ENCODE measurements at regions of chr7 and their contacts with region 1.

Region 1: GRCh38 chr7:81707966-81708365 is 61.9 kb downstream of the HGF start:
- DNase-seq: no peak
- ATAC-seq: no peak
- H3K4me3 ChIP-seq: no peak overlapping the region
- H3K27ac ChIP-seq: no peak overlapping the region
- H3K4me1 ChIP-seq: no peaks in the 10 kb centered on the region; the same call in none of the 2 replicates
- H3K27me3 ChIP-seq: no peaks in the 10 kb centered on the region
- CTCF ChIP-seq: no peak
- POLR2A ChIP-seq: no peak
- RAD21 ChIP-seq: no peak

Region 2: GRCh38 chr7:81754918-81755696 is 47.1 kb after region 1 on chr7:
- CTCF ChIA-PET with region 1: no interaction called
- POLR2A ChIA-PET with region 1: no interaction called
- dilution Hi-C with region 1: no loop called
- in situ Hi-C with region 1: no loop called
- intact Hi-C with region 1: loop called (anchors 5 kb)
- DNase-seq: no peak
- ATAC-seq: no peak
- H3K4me3 ChIP-seq: no peak overlapping the region
- H3K27ac ChIP-seq: no peak overlapping the region
- H3K4me1 ChIP-seq: no peaks in the 10 kb centered on the region
- H3K27me3 ChIP-seq: no peaks in the 10 kb centered on the region
- CTCF ChIP-seq: no peak
- POLR2A ChIP-seq: no peak
- RAD21 ChIP-seq: no peak

Measured in IMR-90 (cell line).